IMR-90 (cell line): ENCODE measurements at regions of chr11 and their contacts with region 1.

Region 1: DNA sequence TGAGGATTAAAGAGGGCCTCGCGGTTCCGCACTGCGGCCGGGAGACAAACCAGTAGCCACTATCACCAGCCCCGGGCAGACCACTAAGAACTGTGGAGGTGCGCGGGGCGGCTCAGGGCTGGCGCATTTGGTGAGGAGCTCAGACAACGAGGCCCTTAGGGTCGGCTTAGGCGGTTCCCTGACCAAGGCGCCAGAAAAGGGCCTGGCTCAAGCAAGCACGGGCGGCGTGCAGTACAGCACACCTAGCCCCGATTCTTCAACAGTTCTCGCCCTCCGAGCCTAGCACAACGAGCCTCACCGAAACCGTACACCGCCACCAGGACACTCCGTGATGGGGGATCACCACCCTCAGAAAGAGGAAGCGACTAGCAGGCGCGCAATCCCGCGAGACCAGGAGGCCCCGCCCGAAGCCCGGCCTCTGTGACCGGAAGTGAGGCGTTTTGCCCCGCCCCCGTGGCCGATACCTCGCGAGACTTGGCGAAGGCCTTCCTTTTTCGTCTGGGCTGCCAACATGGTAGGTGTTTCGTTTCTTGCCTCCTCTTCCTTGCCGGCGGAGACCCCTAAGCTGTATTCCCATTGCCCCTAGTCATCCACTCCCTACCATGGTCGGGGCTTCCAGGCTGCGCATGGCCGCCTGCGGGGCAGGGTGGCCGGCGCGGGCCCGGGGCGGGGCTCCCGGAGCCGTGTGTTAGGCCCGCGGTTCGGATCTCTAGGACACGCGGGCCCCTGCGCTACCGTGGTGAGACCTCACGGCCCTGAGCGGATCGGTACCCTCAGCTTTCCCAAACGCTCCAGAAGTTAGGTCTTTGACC is at the starts of genes RPL27A and TRIM66:
- DNase-seq: peak; percentile 95
- ATAC-seq: peak; percentile 94
- H3K4me3 ChIP-seq: peak within 1 kb of the TSS; percentile 84
- H3K27ac ChIP-seq: peak within 1 kb of the TSS; percentile 92
- H3K4me1 ChIP-seq: peaks cover 3% of the 10 kb centered on the region; the same call in 1 of the 2 replicates
- H3K27me3 ChIP-seq: no peaks in the 10 kb centered on the region
- CTCF ChIP-seq: peak; percentile 10; the same call in 1 of the 2 replicates
- POLR2A ChIP-seq: peak; percentile 97
- RAD21 ChIP-seq: 0 out of 2 replicates have a peak, but pooled peaks have one; percentile 23
- total RNA-seq, gene RPL27A: 451 and 786 TPM in 2 replicates
- total RNA-seq, gene TRIM66: 3.9 and 5.0 TPM in 2 replicates

Region 2: GRCh38 chr11:8604078-8604723 is 78.3 kb before region 1 on chr11:
- CTCF ChIA-PET with region 1: interaction called, 4 read pairs
- POLR2A ChIA-PET with region 1: no interaction called
- dilution Hi-C with region 1: no loop called
- in situ Hi-C with region 1: no loop called
- intact Hi-C with region 1: loop called (anchors 1 kb)
- DNase-seq: peak; percentile 100
- ATAC-seq: peak; percentile 93
- H3K4me3 ChIP-seq: no peak overlapping the region
- H3K27ac ChIP-seq: peak overlapping the region; percentile 74
- H3K4me1 ChIP-seq: peaks cover 11% of the 10 kb centered on the region
- H3K27me3 ChIP-seq: no peaks in the 10 kb centered on the region
- CTCF ChIP-seq: peak; percentile 75
- POLR2A ChIP-seq: no peak
- RAD21 ChIP-seq: peak; percentile 59

Region 3: DNA sequence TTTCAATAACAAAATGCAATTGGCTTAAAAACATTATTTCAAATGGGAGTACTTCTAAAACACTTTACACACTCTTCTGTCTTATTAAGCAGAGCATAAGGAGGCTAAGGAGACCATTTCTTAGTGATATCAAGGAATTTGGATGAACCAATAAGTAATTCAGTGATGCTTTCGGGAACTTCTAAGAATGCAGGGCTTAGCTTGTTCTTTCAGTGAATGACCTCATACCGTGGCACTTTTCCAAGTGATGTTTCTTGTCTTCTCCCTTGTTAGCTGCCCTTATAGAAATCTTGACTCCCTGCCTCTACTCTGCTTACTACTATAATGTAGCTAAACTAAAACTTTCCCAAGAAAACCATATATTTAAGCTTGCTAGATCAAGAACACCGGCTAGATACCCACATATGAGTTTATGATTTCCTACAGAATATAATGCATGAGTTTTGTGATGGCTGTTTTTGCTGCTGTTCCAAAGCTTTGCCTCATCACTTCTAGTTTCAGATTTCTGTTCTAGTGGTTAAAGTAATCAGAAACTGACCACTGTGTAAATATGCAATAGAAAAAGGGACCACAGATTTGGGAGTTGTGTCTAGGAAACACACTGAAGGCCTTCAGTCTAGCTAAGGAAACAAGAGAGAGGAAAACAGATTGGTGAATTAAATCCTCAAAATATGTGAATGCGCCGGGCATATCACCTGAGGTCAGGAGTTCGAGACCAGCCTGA is 51.0 kb before region 1 on chr11:
- CTCF ChIA-PET with region 1: no interaction called
- POLR2A ChIA-PET with region 1: interaction called, 3 read pairs
- dilution Hi-C with region 1: no loop called
- in situ Hi-C with region 1: no loop called
- intact Hi-C with region 1: loop called (anchors 1 kb)
- DNase-seq: peak; percentile 93
- ATAC-seq: peak; percentile 86
- H3K4me3 ChIP-seq: no peak overlapping the region
- H3K27ac ChIP-seq: peak overlapping the region; percentile 62; the same call in 1 of the 2 replicates
- H3K4me1 ChIP-seq: peaks cover 1% of the 10 kb centered on the region; the same call in 1 of the 2 replicates
- H3K27me3 ChIP-seq: no peaks in the 10 kb centered on the region
- CTCF ChIP-seq: no peak
- POLR2A ChIP-seq: no peak
- RAD21 ChIP-seq: no peak; the same call in 1 of the 2 replicates

Region 4: GRCh38 chr11:8744423-8744822 is 61.9 kb after region 1 on chr11:
- CTCF ChIA-PET with region 1: no interaction called
- POLR2A ChIA-PET with region 1: no interaction called
- dilution Hi-C with region 1: no loop called
- in situ Hi-C with region 1: no loop called
- intact Hi-C with region 1: no loop called
- DNase-seq: no peak
- ATAC-seq: no peak
- H3K4me3 ChIP-seq: no peak overlapping the region
- H3K27ac ChIP-seq: no peak overlapping the region
- H3K4me1 ChIP-seq: peaks cover 8% of the 10 kb centered on the region
- H3K27me3 ChIP-seq: no peaks in the 10 kb centered on the region
- CTCF ChIP-seq: no peak
- POLR2A ChIP-seq: no peak
- RAD21 ChIP-seq: no peak

Region 5: GRCh38 chr11:8832571-8833260 is 150.2 kb after region 1 on chr11:
- CTCF ChIA-PET with region 1: no interaction called
- POLR2A ChIA-PET with region 1: interaction called, 38 read pairs
- dilution Hi-C with region 1: no loop called
- in situ Hi-C with region 1: no loop called
- intact Hi-C with region 1: no loop called
- DNase-seq: peak; percentile 83
- ATAC-seq: peak; percentile 89
- H3K4me3 ChIP-seq: no peak overlapping the region
- H3K27ac ChIP-seq: peak overlapping the region; percentile 90
- H3K4me1 ChIP-seq: peaks cover 33% of the 10 kb centered on the region
- H3K27me3 ChIP-seq: no peaks in the 10 kb centered on the region
- CTCF ChIP-seq: no peak
- POLR2A ChIP-seq: no peak
- RAD21 ChIP-seq: no peak